OCI-LY7 (cell line): ENCODE measurements at regions of chr6 and their contacts with region 1.

Region 1: GRCh38 chr6:43667245-43668150 is 20.1 kb downstream of the MRPS18A start:
- DNase-seq: peak; percentile 78
- H3K4me3 ChIP-seq: no peak overlapping the region
- H3K27ac ChIP-seq: no peak overlapping the region
- H3K4me1 ChIP-seq: peaks cover 10% of the 10 kb centered on the region
- CTCF ChIP-seq: peak; percentile 90

Region 2: GRCh38 chr6:43695215-43695966 is 27.9 kb after region 1 on chr6:
- CTCF ChIA-PET with region 1: no interaction called
- POLR2A ChIA-PET with region 1: no interaction called
- intact Hi-C with region 1: no loop called
- DNase-seq: no peak
- H3K4me3 ChIP-seq: no peak overlapping the region
- H3K27ac ChIP-seq: no peak overlapping the region
- H3K4me1 ChIP-seq: no peaks in the 10 kb centered on the region
- CTCF ChIP-seq: no peak

Region 3: GRCh38 chr6:43714311-43715055 is 47.0 kb after region 1 on chr6:
- CTCF ChIA-PET with region 1: interaction called, 3 read pairs
- POLR2A ChIA-PET with region 1: interaction called, 3 read pairs
- intact Hi-C with region 1: loop called (anchors 1 kb)
- DNase-seq: peak; percentile 81
- H3K4me3 ChIP-seq: peak overlapping the region; percentile 49
- H3K27ac ChIP-seq: peak overlapping the region; percentile 93
- H3K4me1 ChIP-seq: peaks cover 72% of the 10 kb centered on the region
- CTCF ChIP-seq: 0 out of 2 replicates have a peak, but pooled peaks have one; percentile 5

Region 4: DNA sequence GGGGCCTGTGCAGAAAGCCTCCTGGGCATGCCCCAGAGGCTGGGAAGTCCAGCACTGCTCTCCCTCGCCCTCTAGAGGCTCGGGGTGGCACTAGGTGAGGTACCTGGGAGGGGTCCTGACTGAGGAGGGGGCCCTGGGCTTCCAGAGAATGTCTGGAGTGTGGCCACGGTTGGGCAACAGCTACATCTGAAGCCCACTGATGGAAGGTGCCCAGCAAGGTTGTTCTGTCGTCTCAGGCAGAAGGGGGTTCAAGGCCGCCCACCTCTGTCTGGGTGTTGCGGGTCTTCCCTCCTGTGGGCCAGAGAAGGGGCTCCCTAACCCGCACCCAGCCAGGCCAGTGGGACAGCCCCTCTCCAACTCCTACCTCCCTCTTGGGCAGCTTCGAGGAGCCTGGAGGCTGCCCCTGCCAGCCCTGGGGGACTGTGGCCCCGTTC is 91.1 kb after region 1 on chr6:
- CTCF ChIA-PET with region 1: interaction called, 7 read pairs
- POLR2A ChIA-PET with region 1: no interaction called
- intact Hi-C with region 1: loop called (anchors 1 kb)
- DNase-seq: peak; percentile 61
- H3K4me3 ChIP-seq: no peak overlapping the region
- H3K27ac ChIP-seq: no peak overlapping the region
- H3K4me1 ChIP-seq: peaks cover 20% of the 10 kb centered on the region
- CTCF ChIP-seq: peak; percentile 92

Region 5: DNA sequence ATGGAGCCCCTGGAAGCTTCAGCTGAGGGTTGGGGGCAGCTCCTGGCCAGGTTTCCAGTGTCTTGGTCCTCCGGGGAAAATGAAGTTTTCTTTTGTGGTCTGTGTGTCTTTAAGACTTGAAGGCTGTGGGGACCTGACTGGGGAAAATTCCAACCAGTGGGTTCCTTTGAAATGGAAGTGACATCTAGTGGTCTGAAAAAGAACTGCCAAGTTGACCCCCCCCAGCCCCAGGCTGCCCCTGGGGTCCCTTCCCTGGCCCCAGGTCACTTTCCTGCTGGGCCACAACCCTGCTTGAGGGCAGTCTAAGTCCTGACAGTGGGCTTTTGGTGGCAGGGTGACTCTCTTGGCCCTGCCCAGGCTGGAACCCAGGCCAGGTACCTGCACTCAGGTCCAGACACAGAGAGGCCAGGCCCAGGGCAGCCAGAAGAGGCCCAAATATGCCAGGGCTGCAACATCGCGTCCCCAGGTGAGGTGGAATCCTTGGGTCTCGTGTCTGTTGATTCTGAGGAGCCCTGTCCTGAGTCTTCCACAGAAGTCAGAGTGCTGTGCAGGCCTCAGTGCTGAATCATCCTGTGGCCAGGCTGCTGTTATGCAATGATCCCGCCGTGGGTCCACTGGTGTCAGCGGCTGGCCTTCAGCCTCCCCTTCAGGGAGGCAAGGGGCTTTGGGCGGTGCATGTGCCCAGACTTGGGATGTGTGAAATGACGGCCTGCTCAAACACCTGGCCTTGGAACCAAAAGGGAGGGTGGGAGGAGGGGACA is 171.0 kb after region 1 on chr6:
- CTCF ChIA-PET with region 1: no interaction called
- POLR2A ChIA-PET with region 1: no interaction called
- intact Hi-C with region 1: loop called (anchors 2 kb)
- DNase-seq: peak; percentile 47
- H3K4me3 ChIP-seq: no peak overlapping the region
- H3K27ac ChIP-seq: no peak overlapping the region
- H3K4me1 ChIP-seq: no peaks in the 10 kb centered on the region
- CTCF ChIP-seq: peak; percentile 73

Region 6: GRCh38 chr6:43937236-43938164 is 270.0 kb after region 1 on chr6:
- CTCF ChIA-PET with region 1: no interaction called
- POLR2A ChIA-PET with region 1: no interaction called
- intact Hi-C with region 1: no loop called
- DNase-seq: no peak
- H3K4me3 ChIP-seq: no peak overlapping the region
- H3K27ac ChIP-seq: no peak overlapping the region
- H3K4me1 ChIP-seq: no peaks in the 10 kb centered on the region
- CTCF ChIP-seq: no peak

Region 7: GRCh38 chr6:44074439-44075136 is 407.1 kb after region 1 on chr6:
- CTCF ChIA-PET with region 1: interaction called, 3 read pairs
- POLR2A ChIA-PET with region 1: interaction called, 3 read pairs
- intact Hi-C with region 1: loop called (anchors 1 kb)
- DNase-seq: peak; percentile 88
- H3K4me3 ChIP-seq: peak overlapping the region; percentile 68
- H3K27ac ChIP-seq: no peak overlapping the region
- H3K4me1 ChIP-seq: peaks cover 46% of the 10 kb centered on the region
- CTCF ChIP-seq: peak; percentile 93